CD8-positive, alpha-beta memory T cell (primary cell): ENCODE measurements at regions of chr1 and their contacts with region 1.

Region 1: DNA sequence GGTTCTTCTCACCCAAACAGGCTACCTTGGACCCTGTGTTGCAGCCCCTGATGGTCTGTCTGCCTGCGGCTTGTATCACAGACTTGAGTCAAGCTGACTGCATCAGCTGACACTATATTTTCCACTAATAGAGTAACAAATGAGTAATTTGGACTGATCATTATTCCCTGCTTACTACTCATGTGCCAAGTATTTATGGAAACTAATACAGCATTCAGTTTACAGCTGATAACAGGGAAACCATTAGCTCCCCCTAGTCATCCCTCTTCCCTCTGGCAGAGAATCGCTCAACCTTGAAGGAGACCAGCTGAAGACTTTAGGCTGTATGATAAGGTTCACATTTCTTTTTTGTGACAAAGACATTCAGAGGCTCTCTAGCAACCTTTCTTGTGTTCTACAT is 116.6 kb upstream of the SYT6 start:
- DNase-seq: no peak
- H3K4me3 ChIP-seq: no peak overlapping the region
- H3K4me3 Mint-ChIP-seq: no peak overlapping the region
- H3K27ac ChIP-seq: no peak overlapping the region
- H3K27ac Mint-ChIP-seq: peak overlapping the region in 1 of 8 donors; percentile 26
- H3K4me1 ChIP-seq: no peaks in the 10 kb centered on the region
- H3K4me1 Mint-ChIP-seq: peaks cover 10 to 14% (median 12%) of the 10 kb centered on the region in 3 donors
- H3K27me3 ChIP-seq: no peaks in the 10 kb centered on the region
- H3K27me3 Mint-ChIP-seq: peaks cover 8 to 43% of the 10 kb centered on the region in 2 donors

Region 2: GRCh38 chr1:114282751-114283403 is 12.6 kb after region 1 on chr1:
- CTCF ChIA-PET with region 1: interaction called, 34 read pairs
- POLR2A ChIA-PET with region 1: no interaction called
- DNase-seq: peak; percentile 71 to 84 (median 75)
- H3K4me3 ChIP-seq: no peak overlapping the region
- H3K4me3 Mint-ChIP-seq: no peak overlapping the region
- H3K27ac ChIP-seq: no peak overlapping the region
- H3K27ac Mint-ChIP-seq: no peak overlapping the region
- H3K4me1 ChIP-seq: no peaks in the 10 kb centered on the region
- H3K4me1 Mint-ChIP-seq: peaks cover 11 to 17% (median 11%) of the 10 kb centered on the region in 3 donors
- H3K27me3 ChIP-seq: no peaks in the 10 kb centered on the region
- H3K27me3 Mint-ChIP-seq: no peaks in the 10 kb centered on the region

Region 3: DNA sequence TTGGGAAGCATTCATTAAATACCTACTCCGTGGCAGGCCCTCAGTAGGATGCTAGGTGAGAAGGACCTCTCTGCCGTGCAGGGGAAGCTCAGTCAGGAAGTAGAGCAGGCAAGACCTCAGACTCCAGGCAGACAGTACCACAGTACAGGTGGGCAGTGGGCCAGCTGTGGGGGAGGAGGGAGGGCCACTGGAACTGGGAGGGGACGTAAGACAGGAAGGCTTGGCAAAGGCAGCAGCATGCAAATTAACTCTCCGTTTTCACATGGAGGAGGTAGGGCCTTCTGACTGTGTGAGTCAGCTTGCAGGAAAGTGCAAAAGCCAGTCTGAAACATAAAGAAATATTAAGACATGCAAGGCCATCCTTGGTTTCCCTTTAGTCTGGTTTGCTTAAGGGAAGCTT is 83.0 kb after region 1 on chr1:
- CTCF ChIA-PET with region 1: no interaction called
- POLR2A ChIA-PET with region 1: no interaction called
- DNase-seq: no peak
- H3K4me3 ChIP-seq: no peak overlapping the region
- H3K4me3 Mint-ChIP-seq: no peak overlapping the region
- H3K27ac ChIP-seq: no peak overlapping the region
- H3K27ac Mint-ChIP-seq: peak overlapping the region in 1 of 8 donors; percentile 27
- H3K4me1 ChIP-seq: peaks cover 6% of the 10 kb centered on the region
- H3K4me1 Mint-ChIP-seq: peaks cover 0 to 6% (median 2%) of the 10 kb centered on the region in 3 donors
- H3K27me3 ChIP-seq: no peaks in the 10 kb centered on the region
- H3K27me3 Mint-ChIP-seq: no peaks in the 10 kb centered on the region